OCI-LY7 (cell line): ENCODE measurements at regions of chr3 and their contacts with region 1.

Region 1: GRCh38 chr3:98573181-98573728 is 20.2 kb downstream of the CPOX start:
- DNase-seq: peak; percentile 64
- H3K4me3 ChIP-seq: peak overlapping the region; percentile 25
- H3K27ac ChIP-seq: no peak overlapping the region
- H3K4me1 ChIP-seq: peaks cover 14% of the 10 kb centered on the region
- CTCF ChIP-seq: peak; percentile 94

Region 2: GRCh38 chr3:97636465-97636864 is 936.8 kb before region 1 on chr3:
- CTCF ChIA-PET with region 1: no interaction called
- POLR2A ChIA-PET with region 1: no interaction called
- intact Hi-C with region 1: no loop called
- DNase-seq: no peak
- H3K4me3 ChIP-seq: no peak overlapping the region
- H3K27ac ChIP-seq: no peak overlapping the region
- H3K4me1 ChIP-seq: no peaks in the 10 kb centered on the region
- CTCF ChIP-seq: no peak

Region 3: DNA sequence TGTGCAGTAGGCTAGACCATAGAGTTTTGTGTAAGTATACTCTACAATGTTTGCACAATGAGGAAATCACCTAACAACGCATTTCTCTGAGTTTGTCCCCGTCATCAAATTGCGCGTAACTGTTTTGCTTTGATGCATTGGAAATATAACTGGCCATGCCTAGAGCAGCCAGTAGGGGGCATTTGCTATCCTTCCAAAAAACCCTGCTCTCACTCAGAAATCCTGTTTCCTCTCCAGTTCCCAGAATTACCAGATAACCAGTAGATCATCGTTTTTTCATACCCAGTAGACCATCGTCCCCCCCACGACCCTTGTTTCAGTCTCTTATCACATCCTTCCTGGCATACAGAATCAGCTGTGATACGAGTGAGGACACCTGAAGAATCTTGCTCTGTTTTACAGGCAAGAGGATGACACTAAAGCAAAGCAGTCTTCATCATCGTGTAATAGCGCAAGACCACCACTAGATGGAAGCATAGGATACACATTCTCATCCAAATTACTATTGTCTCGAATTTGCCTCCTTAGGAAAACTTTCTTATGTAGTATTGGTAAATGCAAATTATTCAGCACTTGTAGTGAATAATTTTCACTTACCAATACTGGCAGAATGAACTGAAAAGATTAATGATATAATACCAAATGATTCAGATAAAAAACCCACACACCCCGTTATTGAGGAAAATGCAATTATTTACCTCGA is 533.8 kb before region 1 on chr3:
- CTCF ChIA-PET with region 1: no interaction called
- POLR2A ChIA-PET with region 1: no interaction called
- intact Hi-C with region 1: loop called (anchors 5 kb)
- DNase-seq: peak; percentile 81
- H3K4me3 ChIP-seq: peak overlapping the region; percentile 63
- H3K27ac ChIP-seq: no peak overlapping the region
- H3K4me1 ChIP-seq: no peaks in the 10 kb centered on the region
- CTCF ChIP-seq: peak; percentile 98

Region 4: GRCh38 chr3:98329392-98330124 is 243.7 kb before region 1 on chr3:
- CTCF ChIA-PET with region 1: no interaction called
- POLR2A ChIA-PET with region 1: no interaction called
- intact Hi-C with region 1: loop called (anchors 2 kb)
- DNase-seq: peak; percentile 56
- H3K4me3 ChIP-seq: no peak overlapping the region
- H3K27ac ChIP-seq: no peak overlapping the region
- H3K4me1 ChIP-seq: no peaks in the 10 kb centered on the region
- CTCF ChIP-seq: peak; percentile 90

Region 5: GRCh38 chr3:98359993-98360675 is 213.1 kb before region 1 on chr3:
- CTCF ChIA-PET with region 1: no interaction called
- POLR2A ChIA-PET with region 1: no interaction called
- intact Hi-C with region 1: loop called (anchors 1 kb)
- DNase-seq: peak; percentile 23
- H3K4me3 ChIP-seq: no peak overlapping the region
- H3K27ac ChIP-seq: no peak overlapping the region
- H3K4me1 ChIP-seq: no peaks in the 10 kb centered on the region
- CTCF ChIP-seq: peak; percentile 47

Region 6: GRCh38 chr3:98522244-98523090 is 50.8 kb before region 1 on chr3 and contains the start of gene CLDND1:
- CTCF ChIA-PET with region 1: no interaction called
- POLR2A ChIA-PET with region 1: interaction called, 4 read pairs
- intact Hi-C with region 1: loop called (anchors 2 kb)
- DNase-seq: peak; percentile 96
- H3K4me3 ChIP-seq: peak within 1 kb of the TSS; percentile 83
- H3K27ac ChIP-seq: peak within 1 kb of the TSS; percentile 17
- H3K4me1 ChIP-seq: peaks cover 29% of the 10 kb centered on the region
- CTCF ChIP-seq: no peak
- total RNA-seq, gene CLDND1: 70.7 and 78.0 TPM in 2 replicates

Region 7: GRCh38 chr3:98680723-98681122 is 107.5 kb after region 1 on chr3:
- CTCF ChIA-PET with region 1: no interaction called
- POLR2A ChIA-PET with region 1: no interaction called
- intact Hi-C with region 1: no loop called
- DNase-seq: no peak
- H3K4me3 ChIP-seq: no peak overlapping the region
- H3K27ac ChIP-seq: no peak overlapping the region
- H3K4me1 ChIP-seq: no peaks in the 10 kb centered on the region
- CTCF ChIP-seq: no peak

Region 8: DNA sequence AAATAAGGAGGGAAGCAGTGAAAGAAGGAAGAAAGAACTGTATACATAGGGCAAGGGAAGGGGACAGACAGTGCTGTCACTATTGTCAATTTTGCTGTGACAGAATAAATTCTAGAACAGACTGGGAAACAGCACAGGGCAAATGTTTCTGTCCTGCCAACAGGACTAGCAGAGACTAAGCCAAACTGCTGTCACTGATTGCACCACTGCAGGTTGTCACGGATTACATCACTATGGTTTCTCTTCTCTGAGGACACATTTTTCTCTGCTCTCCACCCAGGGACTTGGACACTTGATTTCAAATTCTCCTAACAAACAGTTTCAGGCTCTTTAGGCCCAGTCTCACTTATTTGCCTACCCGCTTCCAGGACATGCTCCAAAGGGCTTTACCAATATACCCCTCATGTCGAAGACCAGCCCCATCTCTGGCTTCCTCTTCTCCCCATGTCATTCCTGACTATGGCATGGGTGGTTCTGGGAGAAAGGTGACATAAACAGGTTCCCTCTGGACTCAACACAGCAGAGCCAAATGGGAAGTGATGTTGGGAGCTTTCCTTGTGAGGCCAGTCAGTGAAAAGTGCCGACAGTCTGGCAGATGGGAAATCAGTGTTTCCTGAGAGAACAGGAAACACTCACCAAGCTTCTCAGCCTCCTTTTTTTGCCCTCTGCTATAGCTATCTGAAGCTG is 119.7 kb after region 1 on chr3:
- CTCF ChIA-PET with region 1: no interaction called
- POLR2A ChIA-PET with region 1: no interaction called
- intact Hi-C with region 1: no loop called
- DNase-seq: no peak
- H3K4me3 ChIP-seq: no peak overlapping the region
- H3K27ac ChIP-seq: no peak overlapping the region
- H3K4me1 ChIP-seq: no peaks in the 10 kb centered on the region
- CTCF ChIP-seq: no peak